Vagina (tissue), 2 donors: ENCODE measurements at regions of chr14 and their contacts with region 1.

Region 1: DNA sequence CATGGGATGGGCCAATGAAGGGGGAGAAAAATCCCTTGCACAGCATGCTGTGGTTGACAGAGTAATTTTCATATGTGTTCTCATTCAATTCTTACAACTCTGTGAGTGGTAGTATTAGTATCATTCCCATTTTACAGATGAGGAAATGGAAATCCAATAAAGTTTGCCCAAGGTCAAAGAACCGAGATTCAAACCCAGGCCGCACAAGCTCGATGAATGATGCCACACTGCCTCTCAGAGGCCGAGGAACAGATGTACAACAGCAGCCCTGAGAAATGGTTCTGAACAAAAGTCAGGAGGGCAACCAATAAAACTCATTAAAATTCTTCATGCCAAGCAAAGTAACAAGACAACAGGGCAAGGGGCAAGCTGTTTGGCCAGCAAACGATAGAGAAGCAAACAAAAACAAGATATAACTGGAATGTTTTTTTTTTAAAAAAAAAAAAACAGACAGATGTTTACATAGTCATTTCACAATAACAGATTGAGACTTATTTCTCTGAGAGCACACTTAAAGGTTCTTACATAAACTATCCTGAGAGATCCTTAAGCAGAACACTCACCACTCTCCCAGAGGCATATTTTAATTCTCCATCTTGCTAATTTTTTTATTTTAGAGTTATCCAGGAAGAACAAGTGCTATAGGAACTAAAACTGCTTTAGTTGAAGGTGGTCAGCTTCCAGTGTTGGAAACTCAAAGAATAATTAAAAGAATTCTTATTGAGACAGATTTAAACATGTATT is 85.8 kb downstream of the EXOC5 start:
- DNase-seq: no peak
- H3K4me3 ChIP-seq: no peak overlapping the region
- H3K27ac ChIP-seq: no peak overlapping the region
- H3K4me1 ChIP-seq: no peaks in the 10 kb centered on the region
- H3K27me3 ChIP-seq: no peaks in the 10 kb centered on the region
- CTCF ChIP-seq: no peak
- POLR2A ChIP-seq: no peak

Region 2: DNA sequence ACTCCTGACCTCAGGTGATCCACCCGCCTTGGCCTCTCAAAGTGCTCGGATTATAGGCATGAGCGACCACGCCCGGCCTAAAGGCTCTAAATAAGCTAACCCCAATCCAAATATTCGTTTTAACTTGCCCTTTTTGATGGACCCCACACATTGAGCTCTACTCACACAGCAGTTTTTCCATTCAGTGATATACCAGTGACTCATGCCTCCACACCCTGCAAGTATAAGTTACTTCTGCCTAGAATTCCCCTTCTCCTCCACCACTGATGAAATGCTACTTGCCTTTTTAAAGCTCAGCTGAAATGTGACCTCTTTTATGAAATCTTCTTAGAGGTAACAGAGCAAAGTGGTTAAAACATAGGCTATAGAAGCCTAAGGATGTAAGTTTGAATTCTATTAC is 17.0 kb after region 1 on chr14:
- intact Hi-C with region 1: loop called (anchors 1 kb)
- DNase-seq: no peak
- H3K4me3 ChIP-seq: no peak overlapping the region
- H3K27ac ChIP-seq: no peak overlapping the region
- H3K4me1 ChIP-seq: no peaks in the 10 kb centered on the region
- H3K27me3 ChIP-seq: no peaks in the 10 kb centered on the region
- CTCF ChIP-seq: no peak
- POLR2A ChIP-seq: no peak